OCI-LY7 (cell line): ENCODE measurements at regions of chr1 and their contacts with region 1.

Region 1: DNA sequence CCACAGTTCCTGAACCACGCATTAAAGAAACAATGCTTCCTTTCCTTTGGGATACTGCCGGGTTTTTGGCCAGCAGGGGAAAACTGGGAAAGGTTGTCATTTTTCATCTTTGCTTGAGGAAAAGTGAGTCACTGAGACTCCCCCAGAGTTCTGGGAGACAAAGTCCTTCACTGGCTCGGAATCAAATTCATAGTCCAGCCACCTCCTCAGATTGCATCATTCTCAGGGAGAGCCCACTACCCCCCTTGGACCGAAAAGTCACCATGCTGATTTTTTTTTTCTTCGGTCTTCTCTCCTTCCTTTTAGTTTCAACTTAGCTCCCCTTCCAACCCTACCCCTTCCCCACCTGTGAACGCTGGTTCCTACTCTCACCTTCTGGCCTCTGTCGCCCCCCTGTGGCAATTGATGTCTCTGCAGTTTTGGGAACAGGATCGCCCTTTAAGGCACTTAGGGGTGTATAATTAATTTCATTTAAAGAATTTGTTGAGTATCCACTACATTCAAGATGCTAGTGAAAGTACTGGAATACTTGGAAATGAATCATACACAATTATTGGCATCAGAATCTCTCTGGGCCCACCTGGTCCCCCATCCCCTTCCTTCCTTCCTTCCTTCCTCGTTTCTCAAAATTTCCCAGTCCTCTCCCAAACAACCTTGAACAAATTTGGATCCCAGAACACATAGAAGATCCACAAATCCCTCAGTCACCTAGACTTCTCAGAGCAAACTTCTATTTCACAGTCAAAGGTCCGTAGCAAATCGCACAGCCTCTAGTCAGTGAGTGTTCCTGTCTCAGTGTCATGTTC is 6.9 kb downstream of the ACKR1 start:
- DNase-seq: peak; percentile 45
- H3K4me3 ChIP-seq: no peak overlapping the region
- H3K27ac ChIP-seq: no peak overlapping the region
- H3K4me1 ChIP-seq: no peaks in the 10 kb centered on the region
- CTCF ChIP-seq: peak; percentile 98

Region 2: GRCh38 chr1:159132271-159132881 is 79.2 kb before region 1 on chr1:
- CTCF ChIA-PET with region 1: no interaction called
- POLR2A ChIA-PET with region 1: interaction called, 5 read pairs
- intact Hi-C with region 1: loop called (anchors 2 kb)
- DNase-seq: peak; percentile 62
- H3K4me3 ChIP-seq: no peak overlapping the region
- H3K27ac ChIP-seq: no peak overlapping the region
- H3K4me1 ChIP-seq: no peaks in the 10 kb centered on the region
- CTCF ChIP-seq: peak; percentile 95

Region 3: GRCh38 chr1:159161001-159161718 is 50.4 kb before region 1 on chr1:
- CTCF ChIA-PET with region 1: no interaction called
- POLR2A ChIA-PET with region 1: no interaction called
- intact Hi-C with region 1: loop called (anchors 1 kb)
- DNase-seq: peak; percentile 65
- H3K4me3 ChIP-seq: no peak overlapping the region
- H3K27ac ChIP-seq: no peak overlapping the region
- H3K4me1 ChIP-seq: no peaks in the 10 kb centered on the region
- CTCF ChIP-seq: peak; percentile 97

Region 4: DNA sequence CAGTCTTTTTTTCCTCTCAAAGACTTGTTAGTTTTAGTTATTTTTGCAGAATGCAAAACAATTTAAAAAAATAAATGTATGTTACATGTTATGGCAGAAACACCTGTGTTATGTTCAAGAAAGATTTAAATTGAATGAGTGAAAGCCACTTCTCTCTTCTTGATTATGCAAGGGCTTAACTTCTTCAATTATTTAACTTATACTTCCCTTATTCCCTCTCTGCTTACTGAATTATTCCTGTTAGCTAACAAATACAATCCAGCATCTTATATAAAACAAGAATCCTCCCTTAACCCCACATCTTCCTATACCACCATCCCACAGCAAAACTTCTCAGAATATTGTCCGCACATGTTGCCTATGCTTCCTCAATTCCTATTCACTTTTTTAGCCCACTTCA is 79.9 kb after region 1 on chr1:
- CTCF ChIA-PET with region 1: no interaction called
- POLR2A ChIA-PET with region 1: no interaction called
- intact Hi-C with region 1: no loop called
- DNase-seq: no peak
- H3K4me3 ChIP-seq: no peak overlapping the region
- H3K27ac ChIP-seq: no peak overlapping the region
- H3K4me1 ChIP-seq: no peaks in the 10 kb centered on the region
- CTCF ChIP-seq: no peak